OCI-LY7 (cell line): ENCODE measurements at regions of chr16 and their contacts with region 1.

Region 1: DNA sequence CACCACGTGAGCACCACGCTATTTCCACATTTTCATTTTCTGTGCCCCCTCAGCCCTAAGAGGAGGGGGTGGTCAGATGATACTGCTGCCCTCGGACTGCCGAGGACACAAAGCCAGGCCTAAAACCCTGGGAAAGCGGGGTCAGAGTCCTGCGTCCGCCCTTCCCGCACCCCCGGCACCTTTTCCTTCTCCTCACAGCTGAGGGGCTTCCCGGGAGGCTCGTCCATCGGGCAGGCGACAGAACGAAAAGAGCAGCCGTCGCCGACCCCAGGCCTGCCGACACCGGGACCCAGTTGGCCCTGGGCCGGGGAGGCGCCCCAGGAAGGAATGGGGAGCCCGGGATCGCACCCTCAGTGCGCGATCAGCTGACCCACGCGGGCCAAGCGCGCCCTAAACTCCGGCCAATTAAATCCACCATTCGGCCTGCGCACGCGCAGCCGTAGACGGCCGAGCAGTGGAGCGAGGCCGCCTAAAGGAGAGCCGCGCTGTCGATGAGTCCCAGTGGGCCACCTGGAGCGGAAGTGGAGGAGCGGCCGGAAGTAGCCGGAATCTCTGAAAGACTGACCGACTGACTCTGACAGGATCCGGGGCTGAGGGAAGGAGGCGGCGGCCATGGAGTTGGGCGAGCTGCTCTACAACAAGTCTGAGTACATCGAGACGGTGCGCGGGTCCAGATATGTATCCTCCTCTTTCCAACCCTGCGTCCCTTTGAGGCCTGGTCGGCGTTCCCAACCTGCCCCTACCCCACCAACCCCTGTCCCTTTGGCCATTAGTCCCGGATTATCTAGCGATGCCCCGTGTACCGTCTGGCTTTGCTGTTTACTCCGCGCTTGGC is at the starts of genes DCTN5 and PALB2:
- DNase-seq: peak; percentile 96
- H3K4me3 ChIP-seq: peak within 1 kb of the TSS; percentile 91
- H3K27ac ChIP-seq: peak within 1 kb of the TSS; percentile 74
- H3K4me1 ChIP-seq: peaks cover 17% of the 10 kb centered on the region
- CTCF ChIP-seq: no peak
- total RNA-seq, gene DCTN5: 37.3 and 42.9 TPM in 2 replicates
- total RNA-seq, gene PALB2: 15.1 and 16.6 TPM in 2 replicates

Region 2: GRCh38 chr16:23668225-23668624 is 27.1 kb after region 1 on chr16:
- CTCF ChIA-PET with region 1: no interaction called
- POLR2A ChIA-PET with region 1: no interaction called
- intact Hi-C with region 1: no loop called
- DNase-seq: no peak
- H3K4me3 ChIP-seq: no peak overlapping the region
- H3K27ac ChIP-seq: no peak overlapping the region
- H3K4me1 ChIP-seq: no peaks in the 10 kb centered on the region
- CTCF ChIP-seq: no peak

Region 3: GRCh38 chr16:23678430-23679273 is 37.5 kb after region 1 on chr16 and contains the start of gene PLK1:
- CTCF ChIA-PET with region 1: no interaction called
- POLR2A ChIA-PET with region 1: no interaction called
- intact Hi-C with region 1: loop called (anchors 2 kb)
- DNase-seq: peak; percentile 88
- H3K4me3 ChIP-seq: peak within 1 kb of the TSS; percentile 98
- H3K27ac ChIP-seq: peak within 1 kb of the TSS; percentile 69
- H3K4me1 ChIP-seq: peaks cover 28% of the 10 kb centered on the region
- CTCF ChIP-seq: peak; percentile 62
- total RNA-seq, gene PLK1: 59.6 and 69.5 TPM in 2 replicates